ENCODE measurements at regions of chr18 and their contacts with region 1.

Region 1: GRCh38 chr18:44799907-44800421 is 119.3 kb downstream of the SETBP1 start:
- DNase-seq: no peak
- H3K4me3 Mint-ChIP-seq: no peak overlapping the region
- H3K27ac Mint-ChIP-seq: peak overlapping the region; percentile 88
- H3K4me1 Mint-ChIP-seq: peaks cover 94% of the 10 kb centered on the region
- H3K27me3 Mint-ChIP-seq: peaks cover 7% of the 10 kb centered on the region

Region 2: DNA sequence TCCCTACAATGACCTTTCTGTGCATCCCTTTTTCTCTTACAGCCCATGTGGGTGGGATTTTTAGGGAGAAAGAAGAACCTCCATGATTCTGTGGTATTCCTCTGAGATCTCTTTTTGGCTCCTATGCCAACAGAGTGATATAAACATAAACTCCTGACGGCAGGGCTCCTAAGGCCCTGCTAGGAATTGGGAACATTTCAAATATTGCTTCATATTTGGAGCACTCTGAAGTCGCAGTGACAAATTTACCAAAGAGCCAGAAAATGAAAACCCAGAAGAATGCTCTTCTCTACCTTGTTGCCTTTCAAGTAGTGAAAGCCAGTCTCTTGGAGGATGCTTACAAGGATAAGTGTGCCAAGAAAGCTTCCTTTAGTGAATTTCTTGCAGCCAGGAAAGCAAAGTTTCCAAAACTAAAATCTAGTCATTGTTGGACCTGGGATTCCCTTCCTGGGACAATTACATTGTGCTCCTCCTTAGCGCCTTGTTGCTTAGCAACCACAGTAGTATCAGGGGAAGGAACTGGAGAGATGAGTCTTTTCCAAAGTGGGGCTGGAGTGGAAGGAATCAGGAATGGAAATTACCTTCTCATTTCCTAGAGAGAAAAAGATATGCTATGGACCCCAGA is 126.6 kb before region 1 on chr18:
- intact Hi-C with region 1: no loop called
- DNase-seq: no peak
- H3K4me3 Mint-ChIP-seq: no peak overlapping the region
- H3K27ac Mint-ChIP-seq: no peak overlapping the region
- H3K4me1 Mint-ChIP-seq: peaks cover 11% of the 10 kb centered on the region
- H3K27me3 Mint-ChIP-seq: peaks cover 37% of the 10 kb centered on the region

Region 3: DNA sequence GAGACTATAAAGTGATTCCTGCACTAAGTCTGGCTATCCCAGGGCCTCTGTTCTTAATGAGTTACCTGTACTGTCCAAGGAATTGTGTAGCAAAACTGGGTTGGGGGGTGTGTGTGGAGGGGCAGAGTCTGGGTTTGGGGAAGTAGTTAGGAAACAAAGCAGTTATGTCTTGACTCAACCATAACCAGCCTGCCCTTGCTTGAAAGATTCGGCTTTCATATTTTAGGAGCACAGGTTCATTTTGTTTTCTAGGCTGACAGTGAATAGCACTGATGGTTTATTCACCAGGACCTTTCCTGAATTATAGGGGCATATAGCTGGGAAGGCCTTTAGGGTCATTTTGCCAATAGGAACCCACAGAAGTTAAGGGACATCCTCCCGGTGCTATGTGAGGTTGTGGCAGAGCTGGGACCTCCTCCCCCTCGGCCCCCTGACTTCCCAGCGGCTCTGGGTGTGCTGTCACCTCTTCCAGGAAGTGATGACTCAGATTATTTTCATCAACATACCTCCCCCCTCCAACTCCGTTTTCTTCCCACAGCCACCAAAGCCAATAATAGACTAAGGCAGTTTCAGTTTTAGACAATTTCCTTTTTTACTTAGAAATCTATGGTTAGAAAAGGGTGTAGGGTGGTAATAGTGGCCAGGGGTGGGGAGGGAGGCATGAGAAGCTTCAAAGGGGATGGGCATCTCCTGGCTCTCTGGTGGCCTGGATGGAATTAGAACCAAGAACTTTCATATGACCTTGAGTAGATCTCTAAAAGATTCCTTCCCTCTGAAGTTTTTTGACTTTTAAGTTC is 74.5 kb before region 1 on chr18:
- intact Hi-C with region 1: loop called (anchors 1 kb)
- DNase-seq: peak; percentile 72
- H3K4me3 Mint-ChIP-seq: peak overlapping the region; percentile 38
- H3K27ac Mint-ChIP-seq: peak overlapping the region; percentile 88
- H3K4me1 Mint-ChIP-seq: peaks cover 96% of the 10 kb centered on the region
- H3K27me3 Mint-ChIP-seq: no peaks in the 10 kb centered on the region

Region 4: GRCh38 chr18:44771956-44772917 is 27.7 kb before region 1 on chr18:
- intact Hi-C with region 1: loop called (anchors 2 kb)
- DNase-seq: no peak
- H3K4me3 Mint-ChIP-seq: no peak overlapping the region
- H3K27ac Mint-ChIP-seq: no peak overlapping the region
- H3K4me1 Mint-ChIP-seq: peaks cover 33% of the 10 kb centered on the region
- H3K27me3 Mint-ChIP-seq: peaks cover 8% of the 10 kb centered on the region

Region 5: GRCh38 chr18:44838971-44839666 is 39.2 kb after region 1 on chr18:
- intact Hi-C with region 1: loop called (anchors 2 kb)
- DNase-seq: peak; percentile 73
- H3K4me3 Mint-ChIP-seq: peak overlapping the region; percentile 40
- H3K27ac Mint-ChIP-seq: peak overlapping the region; percentile 59
- H3K4me1 Mint-ChIP-seq: peaks cover 56% of the 10 kb centered on the region
- H3K27me3 Mint-ChIP-seq: peaks cover 5% of the 10 kb centered on the region

Region 6: DNA sequence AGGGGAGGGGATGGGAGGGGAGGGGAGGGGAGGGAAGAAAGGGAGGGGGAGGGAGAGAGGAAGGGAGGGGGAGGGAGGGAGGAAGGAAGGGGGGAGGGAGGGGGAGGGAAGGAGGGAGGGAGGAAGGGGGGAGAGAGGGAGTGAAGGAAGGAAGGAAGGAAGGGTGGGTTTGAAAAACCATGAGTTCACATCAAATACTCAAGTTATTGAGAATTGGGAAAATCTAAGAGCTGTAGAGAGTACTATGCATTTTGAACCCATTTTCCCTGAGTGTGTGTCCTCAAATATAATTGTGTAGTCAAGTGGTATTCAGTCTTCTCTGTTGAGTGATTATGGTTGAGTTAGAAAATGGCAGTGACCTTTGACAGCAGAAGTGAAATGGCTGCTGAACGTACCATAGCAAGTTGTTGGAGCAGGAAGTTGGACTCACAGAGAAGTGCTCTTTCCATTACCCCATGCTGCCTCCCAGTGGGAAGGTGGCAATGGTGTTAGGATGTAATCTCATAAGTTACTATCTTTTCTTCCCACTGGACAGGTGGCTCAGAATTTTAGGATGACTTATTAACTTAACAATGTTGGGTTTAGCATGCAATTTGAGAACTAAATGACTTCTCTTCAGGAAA is 95.3 kb after region 1 on chr18:
- intact Hi-C with region 1: loop called (anchors 1 kb)
- DNase-seq: peak; percentile 15
- H3K4me3 Mint-ChIP-seq: no peak overlapping the region
- H3K27ac Mint-ChIP-seq: peak overlapping the region; percentile 61
- H3K4me1 Mint-ChIP-seq: peaks cover 61% of the 10 kb centered on the region
- H3K27me3 Mint-ChIP-seq: peaks cover 4% of the 10 kb centered on the region